Ascending aorta (tissue), 2 donors: ENCODE measurements at regions of chr18 and their contacts with region 1.

Region 1: GRCh38 chr18:68467957-68468356 is 247.0 kb downstream of the TMX3 start:
- DNase-seq: no peak
- H3K4me3 ChIP-seq: no peak overlapping the region
- H3K27ac ChIP-seq: no peak overlapping the region
- H3K4me1 ChIP-seq: peaks cover 0 to 4% of the 10 kb centered on the region in 2 donors
- H3K27me3 ChIP-seq: no peaks in the 10 kb centered on the region
- CTCF ChIP-seq: no peak

Region 2: DNA sequence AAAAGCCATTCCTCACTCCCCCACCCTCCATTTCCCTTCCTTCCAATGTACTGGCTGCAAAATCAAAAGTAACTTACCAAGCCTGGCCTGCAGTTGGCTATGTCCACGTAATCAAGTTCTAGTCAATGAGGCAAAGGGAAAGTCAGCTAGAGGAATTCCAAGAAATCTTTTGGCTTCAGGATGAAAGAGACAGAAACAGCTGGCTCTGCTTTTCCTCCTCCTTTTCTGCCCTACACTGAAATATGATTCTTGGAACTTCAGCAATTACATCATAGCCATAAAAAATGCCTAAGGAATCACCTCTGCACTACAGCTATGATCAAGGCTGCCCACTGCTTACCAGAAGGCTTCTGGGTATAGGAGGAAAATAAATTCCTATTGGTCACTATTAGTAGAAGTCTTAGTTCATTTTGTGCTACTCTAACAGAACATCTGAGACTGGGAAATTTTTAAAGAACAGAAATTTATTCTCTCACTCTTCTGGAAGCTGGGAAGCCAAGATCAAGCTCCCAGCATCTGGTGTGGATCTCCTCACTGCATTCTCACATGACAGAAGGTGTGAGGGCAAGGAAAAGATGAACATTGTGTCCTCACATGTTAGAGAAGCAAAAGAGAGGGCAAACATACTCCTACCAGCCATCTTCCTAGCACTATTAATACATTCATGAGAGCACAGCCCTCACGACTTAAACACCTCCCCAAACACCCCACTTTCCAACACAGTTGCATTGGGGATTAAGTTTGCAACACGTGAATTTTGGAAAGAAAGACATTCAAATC is 27.0 kb after region 1 on chr18:
- intact Hi-C with region 1: no loop called
- DNase-seq: no peak
- H3K4me3 ChIP-seq: no peak overlapping the region
- H3K27ac ChIP-seq: peak overlapping the region; percentile 12 to 56
- H3K4me1 ChIP-seq: peaks cover 0 to 3% of the 10 kb centered on the region in 2 donors
- H3K27me3 ChIP-seq: no peaks in the 10 kb centered on the region
- CTCF ChIP-seq: no peak

Region 3: DNA sequence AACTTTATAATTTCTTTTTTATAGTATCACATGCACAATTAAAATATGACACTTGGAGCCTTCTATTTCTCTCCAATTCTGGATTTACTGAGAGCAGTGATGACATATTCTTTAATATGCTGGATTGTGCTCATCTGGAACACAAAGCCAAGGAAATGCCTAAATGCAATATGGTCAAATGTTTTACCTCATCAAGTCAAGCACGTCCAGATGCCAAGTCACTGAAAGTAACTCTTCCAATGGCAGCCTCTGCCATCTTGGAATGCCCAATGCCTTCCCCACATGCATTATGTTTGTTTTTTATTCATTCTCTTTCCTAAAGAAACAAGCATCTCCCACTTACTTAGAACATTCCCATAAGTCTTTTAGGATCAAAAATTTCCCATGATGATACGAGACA is 57.1 kb after region 1 on chr18:
- intact Hi-C with region 1: no loop called
- DNase-seq: no peak
- H3K4me3 ChIP-seq: no peak overlapping the region
- H3K27ac ChIP-seq: no peak overlapping the region
- H3K4me1 ChIP-seq: no peaks in the 10 kb centered on the region
- H3K27me3 ChIP-seq: no peaks in the 10 kb centered on the region
- CTCF ChIP-seq: no peak

Region 4: GRCh38 chr18:68596016-68596415 is 128.1 kb after region 1 on chr18:
- intact Hi-C with region 1: no loop called
- DNase-seq: no peak
- H3K4me3 ChIP-seq: no peak overlapping the region
- H3K27ac ChIP-seq: no peak overlapping the region
- H3K4me1 ChIP-seq: no peaks in the 10 kb centered on the region
- H3K27me3 ChIP-seq: no peaks in the 10 kb centered on the region
- CTCF ChIP-seq: no peak

Region 5: DNA sequence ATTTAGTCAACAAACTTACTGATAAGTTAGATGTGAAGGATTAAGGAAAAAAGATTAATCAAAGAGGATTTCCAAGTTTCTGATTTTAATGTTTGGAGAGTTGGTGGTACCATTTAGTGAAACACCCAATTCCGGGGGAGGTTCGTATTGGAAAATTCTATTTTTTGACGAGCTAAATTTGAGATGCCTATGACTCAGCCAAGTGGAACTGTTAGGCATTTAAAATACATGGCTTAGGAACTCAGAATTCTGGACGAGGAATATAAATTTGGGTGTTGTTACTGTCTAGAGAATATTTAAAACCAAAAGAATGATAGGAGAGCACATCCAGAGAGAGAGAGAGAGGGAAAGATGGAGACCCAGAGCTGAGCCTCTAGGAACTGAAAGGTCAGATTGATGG is 143.4 kb after region 1 on chr18:
- intact Hi-C with region 1: loop called (anchors 10 kb)
- DNase-seq: no peak
- H3K4me3 ChIP-seq: no peak overlapping the region
- H3K27ac ChIP-seq: peak overlapping the region; percentile 69 to 80
- H3K4me1 ChIP-seq: peaks cover 0 to 4% of the 10 kb centered on the region in 2 donors
- H3K27me3 ChIP-seq: no peaks in the 10 kb centered on the region
- CTCF ChIP-seq: no peak

Region 6: DNA sequence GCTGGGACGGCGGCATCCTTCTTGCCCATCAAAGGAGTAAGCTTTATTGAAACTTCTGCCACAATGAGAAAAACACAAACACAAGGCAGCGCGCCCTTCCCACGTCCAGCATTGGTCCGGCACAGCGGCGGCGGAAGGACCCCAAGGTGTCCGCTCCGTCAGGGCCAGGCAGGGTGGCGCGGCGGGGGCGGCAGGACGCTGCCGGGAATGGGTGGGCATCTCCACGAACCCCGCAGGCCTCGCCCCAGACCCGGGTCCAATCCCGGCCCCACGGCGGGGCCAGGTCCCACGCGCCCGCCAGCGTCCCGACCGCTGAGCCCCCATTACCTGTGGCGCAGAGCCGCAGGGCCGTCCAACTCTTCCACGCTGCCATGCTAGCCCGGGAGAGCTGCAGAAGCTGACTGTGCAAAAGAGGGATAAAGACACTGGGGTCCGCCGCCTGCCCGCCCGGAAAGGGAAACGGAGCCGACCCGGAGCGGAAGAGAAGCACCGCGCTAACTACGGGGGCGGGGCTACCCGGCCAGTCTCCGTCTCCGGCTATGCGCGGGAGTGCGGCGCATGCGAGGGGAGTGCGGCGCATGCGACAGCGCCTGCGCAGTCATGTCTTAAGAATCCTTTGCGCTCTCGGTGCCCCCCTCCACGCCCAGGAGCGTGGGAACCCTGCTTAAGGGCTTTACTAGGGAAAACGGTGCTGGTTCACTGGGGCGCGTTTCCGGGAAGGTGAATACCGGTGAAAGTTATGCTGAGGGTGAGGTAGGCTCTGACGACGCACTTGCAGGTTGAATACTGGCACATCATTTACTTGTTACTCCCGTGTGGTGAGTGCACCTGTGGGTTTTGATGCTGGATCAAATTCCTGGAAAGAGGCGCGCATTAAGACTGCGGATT is 246.9 kb after region 1 on chr18 and contains the start of gene TMX3:
- intact Hi-C with region 1: loop called (anchors 5 kb)
- DNase-seq: peak; percentile 62 to 94
- H3K4me3 ChIP-seq: peak within 1 kb of the TSS; percentile 66 to 98
- H3K27ac ChIP-seq: peak within 1 kb of the TSS; percentile 40 to 76
- H3K4me1 ChIP-seq: peaks cover 0 to 8% of the 10 kb centered on the region in 2 donors
- H3K27me3 ChIP-seq: no peaks in the 10 kb centered on the region
- CTCF ChIP-seq: no peak
- total RNA-seq, gene TMX3: 12.9 TPM